ENCODE measurements at regions of chr19 and their contacts with region 1.

Region 1: GRCh38 chr19:33406521-33407139 is 33.1 kb downstream of the CEBPG start:
- DNase-seq: peak; percentile 76
- ATAC-seq: peak; percentile 84
- H3K4me3 Mint-ChIP-seq: no peak overlapping the region
- H3K27ac Mint-ChIP-seq: no peak overlapping the region
- H3K4me1 Mint-ChIP-seq: no peaks in the 10 kb centered on the region
- H3K27me3 Mint-ChIP-seq: no peaks in the 10 kb centered on the region

Region 2: DNA sequence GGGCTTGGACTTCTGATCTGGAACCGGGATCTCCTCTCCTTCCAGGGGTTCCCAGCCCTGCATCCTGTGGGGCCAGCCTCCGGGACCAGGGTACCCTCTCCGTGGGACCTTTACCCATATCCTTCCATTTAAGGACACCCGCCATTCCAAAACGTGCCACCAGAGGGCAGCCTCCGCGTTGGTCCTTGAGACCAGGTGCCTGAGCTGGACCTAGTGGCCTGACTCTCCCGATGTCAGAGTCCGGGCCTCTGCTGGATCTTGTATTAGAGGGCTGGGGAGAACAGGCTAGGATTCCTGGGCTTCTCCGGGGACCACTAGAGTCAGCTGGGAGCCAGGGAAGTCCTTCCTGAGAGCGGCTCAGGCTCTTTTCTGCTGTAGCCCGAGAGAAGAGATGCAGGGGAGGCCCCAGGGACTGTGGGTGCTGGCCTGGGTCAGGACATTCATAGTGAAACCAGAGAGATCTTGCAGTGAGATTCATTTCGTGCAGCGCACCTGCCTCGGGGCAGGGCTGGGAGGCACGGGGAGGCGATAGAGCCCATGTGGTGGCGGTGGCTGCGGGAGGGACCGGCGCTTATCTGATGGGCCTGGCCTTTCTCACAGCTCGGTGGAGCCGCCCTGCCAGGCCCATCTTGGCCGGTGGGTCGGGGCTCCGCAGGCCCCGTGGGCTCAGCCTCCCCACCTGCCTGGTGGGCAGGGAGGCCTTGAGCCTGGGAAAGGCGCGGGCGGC is 171.2 kb before region 1 on chr19:
- CTCF ChIA-PET with region 1: interaction called, 12 read pairs
- POLR2A ChIA-PET with region 1: no interaction called
- DNase-seq: peak; percentile 77
- ATAC-seq: peak; percentile 70
- H3K4me3 Mint-ChIP-seq: no peak overlapping the region
- H3K27ac Mint-ChIP-seq: no peak overlapping the region
- H3K4me1 Mint-ChIP-seq: no peaks in the 10 kb centered on the region
- H3K27me3 Mint-ChIP-seq: peaks cover 4% of the 10 kb centered on the region

Measured in activated CD8-positive, alpha-beta T cell treated with anti-CD3 and anti-CD28 coated beads, Interleukin-2, amount 10 ng/mL, durations not matched to agents 7 days and 5 days (primary cell).